ENCODE measurements at regions of chr16 and their contacts with region 1.

Region 1: DNA sequence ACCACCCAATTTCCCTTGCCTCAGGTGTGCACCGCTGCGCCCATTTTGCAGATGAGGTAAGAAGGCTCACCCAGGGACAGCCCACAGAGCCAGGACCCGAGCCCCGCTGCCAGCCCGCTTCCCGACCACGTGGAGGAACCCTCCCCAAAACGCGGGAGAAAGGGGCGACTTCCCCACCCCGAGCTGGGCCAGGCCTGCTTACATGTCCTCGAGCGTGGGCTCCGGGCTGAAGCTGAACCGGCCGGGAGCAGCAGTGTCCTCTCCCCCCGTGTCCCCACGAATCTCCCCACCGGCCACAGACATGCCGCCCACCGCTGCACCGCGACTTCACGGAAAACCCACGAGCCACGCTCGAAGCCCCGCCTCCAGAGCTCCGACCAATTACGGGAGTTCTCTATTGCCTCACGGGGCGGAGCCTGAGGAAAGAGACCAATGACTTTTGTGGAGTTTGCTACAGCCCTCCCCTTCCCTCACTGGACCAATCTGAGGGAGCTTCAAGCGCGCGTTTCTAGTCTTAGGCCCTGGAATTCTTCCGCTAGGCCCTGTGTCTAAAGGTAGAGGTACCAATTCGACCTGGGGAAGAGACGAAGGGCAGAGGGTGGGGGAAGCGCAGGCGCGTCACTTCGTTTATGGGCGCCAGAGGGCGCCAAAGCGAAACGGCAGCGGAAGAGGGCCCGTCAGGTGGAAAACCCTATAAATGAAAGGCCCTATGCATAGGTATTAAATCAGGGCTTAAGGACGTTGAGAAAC is at the start of gene DCTPP1:
- DNase-seq: peak; percentile 94 to 98
- H3K4me3 ChIP-seq: peak within 1 kb of the TSS; percentile 67
- H3K4me3 Mint-ChIP-seq: no peak within 1 kb of the TSS
- H3K27ac Mint-ChIP-seq: no peak within 1 kb of the TSS
- H3K4me1 ChIP-seq: peaks cover 16% of the 10 kb centered on the region
- H3K4me1 Mint-ChIP-seq: no peaks in the 10 kb centered on the region
- H3K27me3 ChIP-seq: no peaks in the 10 kb centered on the region
- H3K27me3 Mint-ChIP-seq: no peaks in the 10 kb centered on the region
- CTCF ChIP-seq: peak; percentile 79 to 81
- total RNA-seq, gene DCTPP1: 51.1 and 53.2 TPM in 2 replicates

Region 2: DNA sequence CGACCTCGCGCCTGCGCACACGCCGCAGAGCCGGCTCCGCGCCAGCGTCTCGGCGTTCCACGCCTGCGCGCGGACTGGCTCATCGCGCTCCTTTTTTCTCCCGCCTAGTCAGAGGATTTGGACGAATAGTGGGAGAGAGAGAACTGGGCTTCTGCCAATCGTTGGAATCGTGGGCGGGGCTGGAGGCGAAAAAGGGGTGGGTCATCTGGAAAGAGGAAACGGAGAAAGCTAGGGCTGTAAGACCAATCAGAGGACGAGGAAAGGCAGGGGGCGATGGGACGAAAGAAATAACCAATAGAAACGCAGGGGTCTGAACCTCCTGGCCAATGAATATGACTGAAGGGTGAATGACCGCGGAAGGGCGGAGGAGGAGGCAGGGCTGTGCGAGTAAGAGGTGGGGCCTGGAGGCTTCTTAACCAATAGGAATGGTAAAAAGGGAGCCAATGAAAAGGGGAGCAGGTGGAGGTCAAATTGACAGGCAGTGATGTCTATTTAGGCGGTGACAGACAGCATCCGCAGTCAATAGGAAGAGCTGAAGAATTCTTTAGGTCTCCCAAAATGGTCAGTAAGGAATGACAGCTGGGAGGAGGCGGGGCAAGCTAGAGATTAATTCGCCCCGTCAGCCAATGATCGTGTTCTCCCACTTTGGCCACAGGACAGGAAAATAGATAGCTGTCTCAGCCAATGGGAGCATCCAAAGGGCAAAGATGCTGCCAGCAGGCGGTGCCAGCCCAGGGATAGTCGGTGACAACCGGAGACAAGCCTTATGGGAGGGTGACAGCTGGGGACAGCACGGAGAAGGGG is 59.2 kb before region 1 on chr16 and contains the start of gene TBC1D10B:
- CTCF ChIA-PET with region 1: interaction called, 13 read pairs
- POLR2A ChIA-PET with region 1: interaction called, 8 read pairs
- intact Hi-C with region 1: no loop called
- DNase-seq: peak; percentile 98 to 99
- H3K4me3 ChIP-seq: peak within 1 kb of the TSS; percentile 63
- H3K4me3 Mint-ChIP-seq: peak within 1 kb of the TSS; percentile 83
- H3K27ac Mint-ChIP-seq: peak within 1 kb of the TSS; percentile 99
- H3K4me1 ChIP-seq: peaks cover 21% of the 10 kb centered on the region
- H3K4me1 Mint-ChIP-seq: peaks cover 33% of the 10 kb centered on the region
- H3K27me3 ChIP-seq: no peaks in the 10 kb centered on the region
- H3K27me3 Mint-ChIP-seq: no peaks in the 10 kb centered on the region
- CTCF ChIP-seq: peak; percentile 17 to 40
- total RNA-seq, gene TBC1D10B: 36.9 and 40.5 TPM in 2 replicates

Region 3: DNA sequence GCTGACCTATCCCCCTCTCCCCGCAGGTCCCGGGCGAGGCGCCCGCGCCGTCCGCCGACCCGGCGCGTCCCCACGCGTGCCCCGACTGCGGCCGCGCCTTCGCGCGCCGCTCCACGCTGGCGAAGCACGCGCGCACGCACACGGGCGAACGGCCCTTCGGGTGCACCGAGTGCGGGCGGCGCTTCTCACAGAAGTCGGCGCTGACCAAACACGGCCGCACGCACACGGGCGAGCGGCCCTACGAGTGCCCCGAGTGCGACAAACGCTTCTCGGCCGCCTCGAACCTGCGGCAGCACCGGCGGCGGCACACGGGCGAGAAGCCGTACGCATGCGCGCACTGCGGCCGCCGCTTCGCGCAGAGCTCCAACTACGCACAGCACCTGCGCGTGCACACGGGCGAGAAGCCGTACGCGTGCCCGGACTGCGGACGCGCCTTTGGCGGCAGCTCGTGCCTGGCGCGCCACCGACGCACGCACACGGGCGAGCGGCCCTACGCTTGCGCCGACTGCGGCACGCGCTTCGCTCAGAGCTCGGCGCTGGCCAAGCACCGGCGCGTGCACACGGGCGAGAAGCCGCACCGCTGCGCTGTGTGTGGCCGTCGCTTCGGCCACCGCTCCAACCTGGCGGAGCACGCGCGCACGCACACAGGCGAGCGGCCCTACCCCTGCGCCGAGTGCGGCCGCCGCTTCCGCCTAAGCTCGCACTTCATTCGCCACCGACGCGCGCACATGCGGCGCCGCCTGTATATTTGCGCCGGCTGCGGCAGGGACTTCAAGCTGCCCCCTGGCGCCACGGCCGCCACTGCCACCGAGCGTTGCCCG is 12.1 kb before region 1 on chr16:
- CTCF ChIA-PET with region 1: interaction called, 49 read pairs
- POLR2A ChIA-PET with region 1: interaction called, 27 read pairs
- intact Hi-C with region 1: no loop called
- DNase-seq: peak; percentile 89 to 91
- H3K4me3 ChIP-seq: peak overlapping the region; percentile 93
- H3K4me3 Mint-ChIP-seq: peak overlapping the region; percentile 60
- H3K27ac Mint-ChIP-seq: no peak overlapping the region
- H3K4me1 ChIP-seq: peaks cover 11% of the 10 kb centered on the region; the same call in 1 of the 2 replicates
- H3K4me1 Mint-ChIP-seq: peaks cover 16% of the 10 kb centered on the region
- H3K27me3 ChIP-seq: no peaks in the 10 kb centered on the region
- H3K27me3 Mint-ChIP-seq: no peaks in the 10 kb centered on the region
- CTCF ChIP-seq: peak in 1 of 2 experiments; percentile 41

Region 4: DNA sequence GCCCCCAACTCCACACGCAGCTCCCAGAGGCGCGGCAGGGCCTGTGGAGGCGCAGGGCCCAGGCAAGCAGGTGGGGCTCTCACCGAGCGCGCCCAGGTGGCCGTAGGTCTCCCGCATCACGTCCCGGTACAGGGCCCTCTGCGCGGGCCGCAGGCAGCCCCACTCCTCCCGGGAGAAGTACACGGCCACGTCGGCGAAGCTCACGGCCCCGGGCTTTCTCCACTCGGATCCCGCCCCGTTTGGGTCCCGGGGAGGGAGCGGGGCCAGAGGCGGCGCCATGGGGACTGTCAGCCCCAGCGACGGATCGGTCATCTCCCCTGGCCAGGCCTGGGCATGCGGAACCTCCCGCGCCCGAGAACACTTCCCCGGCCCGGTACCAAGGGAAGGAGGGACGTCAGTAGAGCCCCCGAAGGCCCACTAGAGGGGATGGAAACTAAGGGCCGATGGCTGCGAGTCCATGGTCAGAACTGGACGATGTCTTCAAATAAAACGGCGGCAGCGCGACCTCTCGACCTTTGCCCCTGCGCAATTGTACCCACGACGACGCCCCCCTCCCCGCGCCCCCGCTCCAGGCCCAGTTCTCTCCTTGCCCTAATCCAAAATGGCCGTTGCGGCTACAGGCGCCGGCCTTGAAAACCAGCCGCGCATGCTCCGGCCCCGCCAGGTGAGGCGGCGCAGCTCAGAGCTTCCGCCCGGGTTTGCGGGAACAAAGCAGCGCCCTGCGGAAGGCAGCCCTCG is 104.7 kb after region 1 on chr16 and contains the start of gene ZNF747:
- CTCF ChIA-PET with region 1: interaction called, 43 read pairs
- POLR2A ChIA-PET with region 1: interaction called, 26 read pairs
- intact Hi-C with region 1: loop called (anchors 1 kb)
- DNase-seq: peak; percentile 89 to 93
- H3K4me3 ChIP-seq: peak within 1 kb of the TSS; percentile 80
- H3K4me3 Mint-ChIP-seq: peak within 1 kb of the TSS; percentile 87
- H3K27ac Mint-ChIP-seq: peak within 1 kb of the TSS; percentile 91
- H3K4me1 ChIP-seq: no peaks in the 10 kb centered on the region; the same call in 1 of the 2 replicates
- H3K4me1 Mint-ChIP-seq: no peaks in the 10 kb centered on the region
- H3K27me3 ChIP-seq: no peaks in the 10 kb centered on the region
- H3K27me3 Mint-ChIP-seq: no peaks in the 10 kb centered on the region
- CTCF ChIP-seq: no peak
- total RNA-seq, gene ZNF747: 6.9 and 8.1 TPM in 2 replicates

Region 5: DNA sequence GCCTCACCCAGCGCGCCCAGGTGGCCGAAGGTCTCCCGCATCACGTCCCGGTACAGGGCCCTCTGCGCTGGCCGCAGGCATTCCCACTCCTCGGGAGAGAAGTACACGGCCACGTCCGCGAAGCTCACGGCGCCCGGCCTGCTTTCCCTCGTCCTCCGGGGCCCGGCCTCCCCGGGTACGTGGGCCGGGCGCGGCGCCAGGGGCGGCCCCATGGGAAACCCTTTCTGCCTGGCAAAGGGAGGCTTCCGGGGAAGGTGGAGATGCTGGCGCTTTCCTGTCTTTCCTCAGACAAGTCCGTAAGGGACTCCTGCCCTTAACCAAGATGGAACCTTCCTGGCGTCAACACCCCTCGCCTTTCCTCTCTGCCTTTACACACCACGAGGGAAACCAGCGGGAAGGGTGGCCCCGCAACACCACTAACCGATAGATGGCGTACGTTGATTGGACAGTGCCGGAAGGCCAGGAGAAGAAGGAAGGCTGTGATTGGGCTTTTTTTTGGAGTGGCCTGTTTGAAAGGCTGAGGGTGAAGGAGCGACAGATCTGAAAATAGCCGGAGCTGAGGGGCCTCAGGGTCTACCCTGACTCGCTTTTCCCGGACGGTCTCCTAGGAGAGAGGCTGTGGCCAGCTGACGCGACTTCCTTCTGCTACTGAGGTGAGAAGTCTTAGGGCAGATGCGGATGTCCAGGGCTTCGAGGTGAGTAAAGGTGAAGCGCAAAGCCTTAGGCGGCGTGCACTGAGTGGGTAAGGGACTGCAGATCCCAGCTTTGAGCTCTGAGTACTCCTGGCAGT is 155.7 kb after region 1 on chr16 and contains the start of gene ZNF785:
- CTCF ChIA-PET with region 1: interaction called, 10 read pairs
- POLR2A ChIA-PET with region 1: no interaction called
- intact Hi-C with region 1: no loop called
- DNase-seq: peak; percentile 96 to 98
- H3K4me3 ChIP-seq: peak within 1 kb of the TSS; percentile 69
- H3K4me3 Mint-ChIP-seq: peak within 1 kb of the TSS; percentile 91
- H3K27ac Mint-ChIP-seq: peak within 1 kb of the TSS; percentile 91
- H3K4me1 ChIP-seq: no peaks in the 10 kb centered on the region
- H3K4me1 Mint-ChIP-seq: no peaks in the 10 kb centered on the region
- H3K27me3 ChIP-seq: no peaks in the 10 kb centered on the region
- H3K27me3 Mint-ChIP-seq: no peaks in the 10 kb centered on the region
- CTCF ChIP-seq: peak in 1 of 2 experiments; percentile 7
- total RNA-seq, gene ZNF785: 13.5 and 13.6 TPM in 2 replicates

Region 6: GRCh38 chr16:30628627-30629540 is 199.0 kb after region 1 on chr16:
- CTCF ChIA-PET with region 1: interaction called, 20 read pairs
- POLR2A ChIA-PET with region 1: interaction called, 5 read pairs
- intact Hi-C with region 1: loop called (anchors 1 kb)
- DNase-seq: peak; percentile 81 to 87
- H3K4me3 ChIP-seq: no peak overlapping the region
- H3K4me3 Mint-ChIP-seq: no peak overlapping the region
- H3K27ac Mint-ChIP-seq: no peak overlapping the region
- H3K4me1 ChIP-seq: no peaks in the 10 kb centered on the region
- H3K4me1 Mint-ChIP-seq: no peaks in the 10 kb centered on the region
- H3K27me3 ChIP-seq: no peaks in the 10 kb centered on the region
- H3K27me3 Mint-ChIP-seq: no peaks in the 10 kb centered on the region
- CTCF ChIP-seq: peak; percentile 76 to 90

Region 7: DNA sequence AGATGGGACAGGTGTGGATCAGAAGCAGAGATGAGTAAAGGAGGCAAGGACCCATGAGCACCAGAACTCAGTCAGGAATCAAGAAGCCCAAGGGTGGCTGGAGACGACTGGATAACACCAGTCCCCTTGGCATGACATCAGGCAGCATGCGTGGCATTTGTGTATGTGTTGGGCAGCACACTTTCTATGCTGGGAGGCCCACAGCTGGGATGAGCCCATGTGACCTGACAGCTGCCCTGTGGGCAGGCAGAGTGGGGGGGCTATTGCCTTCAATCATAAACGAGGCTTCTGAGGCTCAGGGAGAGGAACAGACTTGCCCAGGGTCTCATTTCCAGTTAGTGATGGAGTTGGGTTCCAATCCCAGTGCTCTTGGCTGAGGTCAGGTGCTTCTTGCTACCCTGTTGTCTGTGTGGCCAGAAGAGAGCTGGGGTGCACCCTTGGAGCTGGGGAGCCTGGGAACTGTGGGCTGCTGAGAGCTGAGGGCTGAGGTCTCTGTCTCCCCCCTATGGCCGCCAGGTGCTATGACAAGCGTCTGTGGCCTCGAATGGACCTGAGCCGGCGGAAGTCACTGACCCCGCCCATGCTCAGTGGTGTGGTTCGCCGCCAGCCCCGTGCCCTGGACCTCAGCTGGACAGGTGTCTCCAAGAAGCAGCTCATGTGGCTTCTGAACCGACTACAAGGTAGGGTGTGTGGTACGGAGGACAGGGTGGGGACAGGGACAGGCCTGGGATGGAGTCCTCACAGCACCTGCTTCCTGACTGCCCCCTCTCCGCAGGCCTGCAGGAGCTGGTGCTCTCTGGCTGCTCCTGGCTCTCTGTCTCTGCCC is 512.0 kb after region 1 on chr16:
- CTCF ChIA-PET with region 1: no interaction called
- POLR2A ChIA-PET with region 1: no interaction called
- intact Hi-C with region 1: no loop called
- DNase-seq: peak; percentile 70 to 82
- H3K4me3 ChIP-seq: no peak overlapping the region
- H3K4me3 Mint-ChIP-seq: no peak overlapping the region
- H3K27ac Mint-ChIP-seq: no peak overlapping the region
- H3K4me1 ChIP-seq: peaks cover 7% of the 10 kb centered on the region; the same call in 1 of the 2 replicates
- H3K4me1 Mint-ChIP-seq: no peaks in the 10 kb centered on the region
- H3K27me3 ChIP-seq: no peaks in the 10 kb centered on the region
- H3K27me3 Mint-ChIP-seq: no peaks in the 10 kb centered on the region
- CTCF ChIP-seq: peak; percentile 80 to 91

Measured in Caco-2 (cell line).